ENCODE measurements at regions of chr2 and their contacts with region 1.

Region 1: GRCh38 chr2:8662239-8662895 is 19.5 kb upstream of the ID2 start:
- DNase-seq: no peak
- ATAC-seq: peak in 1 of 4 donors; percentile 35
- H3K4me3 ChIP-seq: no peak overlapping the region
- H3K27ac ChIP-seq: peak overlapping the region in 1 of 12 donors; percentile 57
- H3K4me1 ChIP-seq: peaks cover 0 to 14% (median 6%) of the 10 kb centered on the region in 12 donors
- H3K27me3 ChIP-seq: no peaks in the 10 kb centered on the region
- CTCF ChIP-seq: no peak
- POLR2A ChIP-seq: no peak

Region 2: DNA sequence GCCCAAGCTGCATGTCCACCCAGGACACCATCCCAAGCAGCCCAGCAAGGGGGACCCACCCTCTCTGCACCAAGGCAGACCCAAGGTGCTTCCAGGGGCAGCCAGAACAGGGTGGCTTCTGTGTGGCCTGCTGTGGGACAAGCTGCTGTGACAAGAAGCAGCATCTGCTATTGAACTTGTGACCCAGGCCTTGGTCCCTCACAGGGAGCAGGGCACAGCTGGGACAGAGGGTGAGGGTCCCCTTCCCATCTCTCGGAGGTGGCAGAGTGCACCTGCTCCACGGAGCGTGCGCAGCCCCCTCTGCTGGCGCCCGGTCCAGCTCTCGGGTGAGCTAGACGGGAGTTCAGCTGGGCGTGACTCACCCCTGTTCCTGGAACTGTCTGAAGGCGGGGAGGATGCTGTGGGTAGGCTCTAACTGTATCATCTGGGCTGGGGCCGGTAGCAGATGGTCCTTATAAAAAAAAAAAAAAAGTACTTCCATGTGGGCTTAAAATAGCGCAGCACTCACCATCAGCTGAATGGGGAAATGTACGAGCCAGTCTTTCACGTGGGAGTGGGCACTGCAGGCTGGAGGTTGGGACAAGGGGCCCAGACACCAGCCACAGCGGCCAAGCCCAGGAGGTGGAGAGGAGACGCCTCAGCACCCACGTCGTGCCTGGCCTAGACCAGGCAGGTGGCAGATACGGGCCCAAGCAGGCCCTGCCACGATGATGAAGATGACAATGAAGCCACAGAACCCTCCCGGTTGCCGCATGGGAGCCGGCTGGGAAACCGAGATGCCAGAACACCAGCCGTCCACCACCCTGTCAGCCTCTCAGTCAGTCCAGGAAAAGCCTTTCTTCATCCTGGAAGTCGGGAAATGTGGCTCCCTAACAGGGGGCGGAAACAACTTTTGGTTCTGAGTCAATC is 117.3 kb before region 1 on chr2:
- intact Hi-C with region 1: loop called in 1 of 10 experiments (anchors 10 kb)
- DNase-seq: peak; percentile 71 to 87 (median 79)
- ATAC-seq: peak; percentile 72 to 90 (median 86)
- H3K4me3 ChIP-seq: no peak overlapping the region
- H3K27ac ChIP-seq: peak overlapping the region in 6 of 12 donors; percentile 2 to 97 (median 42)
- H3K4me1 ChIP-seq: peaks cover 0 to 71% (median 25%) of the 10 kb centered on the region in 12 donors
- H3K27me3 ChIP-seq: no peaks in the 10 kb centered on the region
- CTCF ChIP-seq: peak; percentile 5 to 57 (median 32)
- POLR2A ChIP-seq: no peak

Region 3: GRCh38 chr2:8598295-8599165 is 63.8 kb before region 1 on chr2:
- intact Hi-C with region 1: loop called in 1 of 10 experiments (anchors 5 kb)
- DNase-seq: peak in 1 of 5 donors; percentile 48
- ATAC-seq: peak in 2 of 4 donors; percentile 71 to 80
- H3K4me3 ChIP-seq: no peak overlapping the region
- H3K27ac ChIP-seq: no peak overlapping the region
- H3K4me1 ChIP-seq: peaks cover 0 to 10% (median 0%) of the 10 kb centered on the region in 12 donors
- H3K27me3 ChIP-seq: no peaks in the 10 kb centered on the region
- CTCF ChIP-seq: no peak
- POLR2A ChIP-seq: no peak